HepG2 (cell line): ENCODE measurements at regions of chr2 and their contacts with region 1.

Region 1: DNA sequence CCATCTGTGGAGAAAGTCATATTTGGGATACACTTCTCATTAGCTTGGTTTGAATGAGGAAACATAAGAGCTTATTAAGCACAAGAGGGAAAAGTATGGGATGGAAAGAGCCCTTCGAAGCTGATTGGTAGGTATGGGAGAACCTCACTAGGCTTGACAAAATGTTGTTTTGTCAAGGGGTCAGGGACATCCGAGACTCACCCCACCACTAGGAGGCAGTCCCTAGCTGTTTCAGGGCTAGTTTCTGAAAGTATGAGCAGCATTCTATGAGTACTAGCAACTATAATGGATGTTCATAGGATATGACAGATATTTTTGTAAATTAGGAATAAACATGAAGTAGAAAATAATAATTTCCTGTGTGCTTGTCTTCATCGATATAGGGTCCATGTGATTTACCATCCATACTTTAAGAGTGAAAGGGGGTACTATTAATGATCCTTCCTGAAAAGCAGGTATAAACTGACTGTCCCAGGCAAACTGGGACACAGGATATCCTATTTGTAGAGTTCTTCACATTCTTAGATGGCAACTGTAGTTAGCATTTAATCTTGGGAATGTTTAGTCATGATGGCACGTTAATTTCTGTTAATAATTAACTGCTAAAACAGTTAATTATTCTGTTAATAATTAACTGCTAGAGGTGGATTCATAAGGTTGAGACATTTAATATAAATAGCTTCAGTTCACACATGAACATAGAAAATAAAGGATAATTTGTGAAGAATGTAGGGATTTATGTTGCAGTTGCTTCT is 28.4 kb downstream of the OTX1 start:
- DNase-seq: peak; percentile 61
- ATAC-seq: peak; percentile 90
- H3K4me3 ChIP-seq: no peak overlapping the region
- H3K27ac ChIP-seq: no peak overlapping the region
- H3K4me1 ChIP-seq: peaks cover 27% of the 10 kb centered on the region
- H3K27me3 ChIP-seq: no peaks in the 10 kb centered on the region
- CTCF ChIP-seq: peak; percentile 83
- EP300 ChIP-seq: no peak
- POLR2A ChIP-seq: no peak
- RAD21 ChIP-seq: peak; percentile 73

Region 2: DNA sequence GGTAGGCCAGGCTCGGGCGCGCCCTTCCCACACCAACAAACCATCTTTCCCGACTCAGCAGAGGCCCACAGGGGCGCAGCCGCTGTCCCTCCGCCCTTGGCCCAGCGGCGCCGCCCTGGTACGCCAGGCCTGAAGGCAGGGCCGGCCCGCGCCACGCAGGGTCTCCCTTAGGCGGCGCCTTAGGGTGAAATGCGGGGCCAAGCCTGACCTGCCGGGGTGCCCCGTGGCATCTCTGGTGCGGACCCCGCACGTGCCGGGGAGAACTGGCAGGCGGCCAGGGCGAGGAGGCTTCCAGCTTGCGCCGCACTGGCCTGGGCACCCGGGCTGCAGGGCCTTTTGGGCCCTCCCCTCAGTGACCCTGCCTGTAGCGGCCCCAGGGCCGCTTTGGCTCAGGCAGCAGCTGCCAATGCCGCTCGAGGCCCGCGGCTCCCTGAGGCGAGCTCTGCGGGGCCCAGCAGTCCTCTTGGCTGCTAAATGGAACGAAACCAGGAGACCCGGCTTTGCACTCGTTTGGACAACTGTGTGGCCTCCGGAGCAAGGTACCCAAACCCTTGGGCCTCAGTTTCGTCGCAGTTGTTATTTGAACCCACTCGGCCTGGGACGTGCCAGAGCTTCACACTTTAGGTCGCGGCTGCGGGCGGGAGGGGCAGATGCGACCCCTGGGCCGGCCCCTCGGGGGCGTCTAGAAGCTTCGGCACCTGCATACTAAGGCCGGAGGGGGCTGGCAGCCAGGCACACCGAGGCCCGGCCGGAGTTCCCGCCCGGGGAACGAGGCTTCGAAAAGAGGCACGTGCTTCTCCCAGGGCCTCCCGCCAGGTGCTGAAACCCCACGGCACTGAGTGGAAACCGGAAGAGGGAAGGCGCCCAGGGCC is 19.9 kb before region 1 on chr2:
- CTCF ChIA-PET with region 1: no interaction called
- POLR2A ChIA-PET with region 1: no interaction called
- in situ Hi-C with region 1: no loop called
- intact Hi-C with region 1: no loop called
- DNase-seq: no peak
- ATAC-seq: peak; percentile 49
- H3K4me3 ChIP-seq: no peak overlapping the region
- H3K27ac ChIP-seq: no peak overlapping the region
- H3K4me1 ChIP-seq: no peaks in the 10 kb centered on the region
- H3K27me3 ChIP-seq: no peaks in the 10 kb centered on the region
- CTCF ChIP-seq: no peak
- EP300 ChIP-seq: no peak
- POLR2A ChIP-seq: no peak
- RAD21 ChIP-seq: no peak

Region 3: GRCh38 chr2:63189026-63189425 is 110.0 kb after region 1 on chr2:
- CTCF ChIA-PET with region 1: interaction called, 5 read pairs
- POLR2A ChIA-PET with region 1: no interaction called
- in situ Hi-C with region 1: no loop called
- intact Hi-C with region 1: loop called (anchors 1 kb)
- DNase-seq: peak; percentile 71
- ATAC-seq: peak; percentile 74
- H3K4me3 ChIP-seq: no peak overlapping the region; a peak in 1 of 6 replicates
- H3K27ac ChIP-seq: no peak overlapping the region
- H3K4me1 ChIP-seq: peaks cover 58% of the 10 kb centered on the region
- H3K27me3 ChIP-seq: no peaks in the 10 kb centered on the region
- CTCF ChIP-seq: peak; percentile 92
- EP300 ChIP-seq: peak in 1 of 2 experiments; percentile 12; a peak in 1 of 4 replicates
- POLR2A ChIP-seq: no peak
- RAD21 ChIP-seq: peak; percentile 68

Region 4: DNA sequence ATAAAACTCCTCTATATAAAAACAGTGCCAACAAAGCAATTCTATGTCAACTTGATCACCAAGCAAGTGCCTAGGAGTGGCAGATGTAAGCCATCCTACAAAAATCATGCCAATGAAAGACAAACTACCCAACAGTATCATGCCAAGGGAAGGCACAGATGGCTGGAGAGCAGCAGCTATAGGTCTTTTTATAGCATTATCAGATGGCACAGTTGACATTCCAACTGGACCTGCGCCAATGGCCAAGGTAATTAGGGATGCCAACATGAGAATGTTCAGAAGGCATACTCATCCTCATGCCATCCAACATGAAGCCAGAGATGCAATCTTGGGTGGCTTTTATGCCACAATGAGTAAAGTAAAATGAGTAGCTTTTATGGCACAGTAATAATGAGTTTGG is 208.9 kb after region 1 on chr2:
- CTCF ChIA-PET with region 1: no interaction called
- POLR2A ChIA-PET with region 1: no interaction called
- in situ Hi-C with region 1: loop called (anchors 25 kb)
- intact Hi-C with region 1: no loop called
- DNase-seq: no peak
- ATAC-seq: no peak
- H3K4me3 ChIP-seq: no peak overlapping the region
- H3K27ac ChIP-seq: no peak overlapping the region
- H3K4me1 ChIP-seq: no peaks in the 10 kb centered on the region
- H3K27me3 ChIP-seq: no peaks in the 10 kb centered on the region
- CTCF ChIP-seq: no peak
- EP300 ChIP-seq: no peak
- POLR2A ChIP-seq: no peak
- RAD21 ChIP-seq: no peak

Region 5: GRCh38 chr2:63488118-63488713 is 409.2 kb after region 1 on chr2:
- CTCF ChIA-PET with region 1: interaction called, 6 read pairs
- POLR2A ChIA-PET with region 1: no interaction called
- in situ Hi-C with region 1: loop called (anchors 10 kb)
- intact Hi-C with region 1: loop called (anchors 1 kb)
- DNase-seq: peak; percentile 21
- ATAC-seq: peak; percentile 59
- H3K4me3 ChIP-seq: no peak overlapping the region
- H3K27ac ChIP-seq: no peak overlapping the region
- H3K4me1 ChIP-seq: no peaks in the 10 kb centered on the region
- H3K27me3 ChIP-seq: no peaks in the 10 kb centered on the region
- CTCF ChIP-seq: peak; percentile 67
- EP300 ChIP-seq: no peak
- POLR2A ChIP-seq: no peak
- RAD21 ChIP-seq: no peak; the same call in 1 of the 2 replicates